Dendritic cell treated with granulocyte-macrophage colony-stimulating factor and Interleukin-4, amounts not matched to agents 40 ng/mL and 50 ng/mL, for 4 days (primary cell): ENCODE measurements at regions of chr21 and their contacts with region 1.

Region 1: DNA sequence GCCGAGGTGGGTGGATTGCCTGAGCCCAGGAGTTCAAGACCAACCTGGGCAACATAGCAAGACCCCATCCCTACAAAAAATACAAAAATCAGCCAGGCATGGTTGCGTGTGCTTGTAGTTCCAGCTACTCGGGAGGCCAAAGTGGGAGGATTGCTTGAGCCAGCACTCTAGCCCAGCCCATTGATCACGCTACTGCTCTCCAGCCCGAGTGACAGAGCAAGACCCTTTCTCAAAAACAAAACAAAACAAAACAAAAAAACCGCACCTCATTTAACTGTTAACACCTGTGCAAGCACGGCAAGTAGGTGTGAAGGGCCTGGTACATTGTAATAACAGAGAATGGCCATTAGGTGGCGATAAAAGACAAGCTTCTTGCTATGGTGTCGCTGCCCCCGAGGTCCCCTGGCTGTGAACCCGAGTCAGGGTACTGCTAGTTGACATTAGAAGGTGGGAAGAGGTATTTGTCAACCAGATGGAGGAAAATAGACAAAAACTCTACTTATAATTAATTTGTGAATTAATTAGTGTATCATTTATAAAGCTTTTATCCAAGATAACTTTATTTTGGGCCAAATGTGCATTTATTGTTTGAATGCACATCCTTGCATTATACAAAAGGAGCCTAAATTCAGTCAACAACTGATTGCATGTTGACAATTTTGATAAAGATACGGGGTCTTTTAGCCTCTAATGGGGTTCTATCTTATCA is 66.5 kb downstream of the SH3BGR start:
- H3K4me3 Mint-ChIP-seq: no peak overlapping the region
- H3K27ac Mint-ChIP-seq: no peak overlapping the region
- H3K4me1 Mint-ChIP-seq: no peaks in the 10 kb centered on the region
- H3K27me3 Mint-ChIP-seq: no peaks in the 10 kb centered on the region

Region 2: DNA sequence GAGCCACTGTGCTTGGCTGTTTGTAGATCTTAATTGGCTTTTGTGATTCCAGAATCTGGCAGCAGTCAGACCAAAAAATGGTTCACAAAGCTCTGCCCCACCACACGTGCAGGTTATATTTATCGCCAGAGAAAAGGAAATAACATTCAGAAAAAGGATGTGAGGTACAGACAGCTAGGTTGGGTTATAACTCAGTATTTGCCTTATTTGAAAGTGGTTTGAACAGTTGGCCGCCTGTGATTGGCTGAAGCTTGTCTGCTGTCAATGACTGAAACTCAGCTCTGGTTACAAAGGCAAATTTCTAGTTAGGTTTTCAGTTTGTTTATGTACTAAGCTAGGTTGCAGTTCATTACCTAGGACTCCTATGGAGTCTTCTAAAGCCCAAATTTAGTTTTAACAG is 56.9 kb before region 1 on chr21:
- intact Hi-C with region 1: no loop called
- H3K4me3 Mint-ChIP-seq: no peak overlapping the region
- H3K27ac Mint-ChIP-seq: no peak overlapping the region
- H3K4me1 Mint-ChIP-seq: no peaks in the 10 kb centered on the region
- H3K27me3 Mint-ChIP-seq: no peaks in the 10 kb centered on the region

Region 3: DNA sequence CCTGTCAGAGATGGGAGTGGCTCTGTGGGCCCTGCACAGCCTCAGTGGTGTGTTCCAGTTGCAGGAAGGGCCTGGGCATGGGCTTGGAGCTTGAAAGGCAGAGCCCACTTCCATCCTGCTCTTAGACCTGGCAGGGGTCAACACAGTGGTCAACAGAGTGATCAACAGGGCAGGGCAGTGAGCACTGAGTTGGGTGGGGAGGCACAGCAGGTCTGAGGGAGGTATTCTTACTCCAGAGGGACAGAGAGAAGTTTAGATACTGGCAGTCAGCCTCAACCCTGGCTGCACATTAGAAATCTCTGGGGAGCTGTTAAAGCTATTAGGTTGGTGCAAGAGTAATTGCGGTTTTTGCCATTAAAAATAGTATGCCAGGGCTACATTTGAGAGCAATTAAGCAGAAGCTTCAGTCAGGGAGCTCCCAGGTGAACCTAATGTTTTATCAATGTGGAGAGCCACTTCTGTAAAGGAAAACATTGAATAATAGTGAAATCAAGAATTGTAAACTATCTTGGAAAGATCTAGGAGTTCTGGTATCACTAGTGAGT is 28.8 kb before region 1 on chr21:
- intact Hi-C with region 1: no loop called
- H3K4me3 Mint-ChIP-seq: no peak overlapping the region
- H3K27ac Mint-ChIP-seq: no peak overlapping the region
- H3K4me1 Mint-ChIP-seq: no peaks in the 10 kb centered on the region
- H3K27me3 Mint-ChIP-seq: no peaks in the 10 kb centered on the region

Region 4: GRCh38 chr21:39715804-39716397 is 197.6 kb after region 1 on chr21:
- intact Hi-C with region 1: loop called (anchors 1 kb)
- H3K4me3 Mint-ChIP-seq: no peak overlapping the region
- H3K27ac Mint-ChIP-seq: no peak overlapping the region
- H3K4me1 Mint-ChIP-seq: no peaks in the 10 kb centered on the region
- H3K27me3 Mint-ChIP-seq: peaks cover 1% of the 10 kb centered on the region